CD8-positive, alpha-beta memory T cell (primary cell): ENCODE measurements at regions of chr6 and their contacts with region 1.

Region 1: GRCh38 chr6:166989427-166990032 is 9.7 kb upstream of the CEP43 start:
- DNase-seq: peak in 3 of 5 donors; percentile 7 to 59 (median 54)
- H3K4me3 ChIP-seq: no peak overlapping the region
- H3K4me3 Mint-ChIP-seq: no peak overlapping the region
- H3K27ac ChIP-seq: no peak overlapping the region
- H3K27ac Mint-ChIP-seq: peak overlapping the region in 1 of 8 donors; percentile 62
- H3K4me1 ChIP-seq: peaks cover 10% of the 10 kb centered on the region
- H3K4me1 Mint-ChIP-seq: peaks cover 7 to 17% (median 12%) of the 10 kb centered on the region in 3 donors
- H3K27me3 ChIP-seq: no peaks in the 10 kb centered on the region
- H3K27me3 Mint-ChIP-seq: no peaks in the 10 kb centered on the region

Region 2: DNA sequence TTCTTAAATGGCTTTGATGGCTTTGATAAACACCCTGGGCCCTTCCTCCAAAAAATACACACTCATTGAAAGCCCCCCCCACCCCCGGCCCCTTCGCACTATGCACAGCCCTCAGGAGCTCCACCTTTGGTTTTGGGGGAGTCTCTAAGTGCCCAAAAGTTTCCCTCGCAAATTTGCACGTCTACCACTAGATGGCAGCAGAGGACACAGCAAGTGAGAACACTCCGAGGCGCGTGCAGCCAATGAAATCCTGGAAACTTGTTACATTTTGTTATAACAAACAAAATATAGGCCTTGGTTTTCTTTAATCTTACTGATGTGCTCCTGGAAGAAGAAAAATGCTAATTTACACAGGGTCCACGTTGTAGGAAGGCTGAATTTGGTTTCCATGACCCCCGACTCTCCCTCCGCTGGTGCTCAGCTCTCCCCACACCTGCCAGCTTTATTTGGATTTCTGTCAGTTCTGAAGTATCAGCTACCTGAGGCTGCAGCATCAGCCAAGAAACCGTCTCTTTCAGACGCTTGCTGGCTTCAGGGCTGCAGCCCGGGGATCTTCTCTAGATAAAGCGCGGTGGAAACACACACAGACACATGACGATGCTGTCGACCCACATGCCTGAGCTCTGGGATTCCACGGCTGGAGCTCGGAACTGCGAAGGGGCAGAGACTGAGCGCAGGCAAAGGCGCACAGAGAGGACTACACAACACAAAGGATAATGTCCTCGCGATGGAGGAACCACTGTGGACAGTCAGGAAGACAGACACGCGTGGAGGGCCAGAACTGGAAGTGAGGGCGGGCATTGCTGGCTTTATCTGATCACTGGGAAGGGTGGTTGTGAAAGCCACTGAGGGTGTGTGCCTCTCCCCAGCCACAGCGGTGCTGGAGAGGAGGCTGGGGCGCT is 214.1 kb before region 1 on chr6:
- CTCF ChIA-PET with region 1: interaction called, 36 read pairs
- POLR2A ChIA-PET with region 1: no interaction called
- DNase-seq: peak; percentile 40 to 78 (median 59)
- H3K4me3 ChIP-seq: no peak overlapping the region
- H3K4me3 Mint-ChIP-seq: no peak overlapping the region
- H3K27ac ChIP-seq: no peak overlapping the region
- H3K27ac Mint-ChIP-seq: no peak overlapping the region
- H3K4me1 ChIP-seq: peaks cover 4% of the 10 kb centered on the region
- H3K4me1 Mint-ChIP-seq: peaks cover 0 to 6% (median 2%) of the 10 kb centered on the region in 3 donors
- H3K27me3 ChIP-seq: no peaks in the 10 kb centered on the region
- H3K27me3 Mint-ChIP-seq: peaks cover 4 to 47% of the 10 kb centered on the region in 2 donors

Region 3: DNA sequence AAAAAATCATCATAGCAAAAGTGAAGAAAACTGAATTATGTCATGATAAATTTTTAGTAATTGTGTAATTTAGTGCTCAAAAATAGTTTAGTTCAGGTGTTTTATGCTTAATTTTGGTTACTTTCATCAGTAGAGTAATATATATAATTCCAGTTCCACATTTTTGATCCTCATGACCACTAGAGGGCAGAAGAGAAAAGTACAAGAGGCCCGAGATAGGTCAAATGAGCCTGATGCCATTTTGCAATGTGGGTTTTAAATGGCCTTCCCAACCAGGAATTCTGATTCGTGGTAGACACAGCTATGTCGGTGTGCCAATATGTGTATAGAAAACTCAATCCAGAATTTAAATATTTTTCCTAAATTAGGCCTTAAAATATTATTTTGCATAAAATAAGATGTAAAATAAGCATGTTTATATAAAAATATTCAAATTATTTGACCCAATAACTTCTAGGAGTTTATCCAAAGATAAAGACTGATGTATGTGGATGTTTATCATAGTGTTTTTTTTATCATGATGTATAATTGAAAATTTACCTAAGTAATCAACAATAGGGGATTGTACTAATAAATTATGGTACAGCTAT is 202.7 kb before region 1 on chr6:
- CTCF ChIA-PET with region 1: interaction called, 46 read pairs
- POLR2A ChIA-PET with region 1: no interaction called
- DNase-seq: peak in 2 of 5 donors; percentile 43 to 49
- H3K4me3 ChIP-seq: no peak overlapping the region
- H3K4me3 Mint-ChIP-seq: no peak overlapping the region
- H3K27ac ChIP-seq: no peak overlapping the region
- H3K27ac Mint-ChIP-seq: peak overlapping the region in 1 of 8 donors; percentile 64
- H3K4me1 ChIP-seq: no peaks in the 10 kb centered on the region
- H3K4me1 Mint-ChIP-seq: no peaks in the 10 kb centered on the region
- H3K27me3 ChIP-seq: no peaks in the 10 kb centered on the region
- H3K27me3 Mint-ChIP-seq: peaks cover 0 to 6% of the 10 kb centered on the region in 2 donors

Region 4: DNA sequence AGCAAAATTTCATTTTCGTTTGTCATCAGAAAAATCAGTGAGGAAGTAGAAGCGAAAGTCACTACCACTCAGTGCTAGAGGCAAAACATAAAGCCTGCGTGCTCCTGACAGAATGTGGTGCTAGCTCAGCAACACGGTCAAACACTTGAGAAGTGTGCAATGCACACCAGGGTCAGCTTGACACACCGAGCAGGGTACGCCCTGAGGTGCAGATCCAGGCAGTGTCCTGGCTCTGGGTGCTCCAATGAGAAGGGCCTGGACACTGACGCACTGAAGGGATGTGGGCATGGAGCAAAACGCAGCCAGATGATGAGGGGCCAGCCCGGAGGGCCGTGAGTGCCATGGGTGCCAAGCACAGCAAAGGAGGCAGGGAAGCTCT is 39.1 kb before region 1 on chr6:
- CTCF ChIA-PET with region 1: interaction called, 37 read pairs
- POLR2A ChIA-PET with region 1: interaction called, 4 read pairs
- DNase-seq: no peak
- H3K4me3 ChIP-seq: peak overlapping the region; percentile 61
- H3K4me3 Mint-ChIP-seq: peak overlapping the region; percentile 80 to 95 (median 85)
- H3K27ac ChIP-seq: peak overlapping the region; percentile 71
- H3K27ac Mint-ChIP-seq: peak overlapping the region; percentile 89 to 100 (median 96)
- H3K4me1 ChIP-seq: peaks cover 60% of the 10 kb centered on the region
- H3K4me1 Mint-ChIP-seq: peaks cover 41 to 64% (median 61%) of the 10 kb centered on the region in 3 donors
- H3K27me3 ChIP-seq: no peaks in the 10 kb centered on the region
- H3K27me3 Mint-ChIP-seq: peaks cover 0 to 2% of the 10 kb centered on the region in 2 donors

Region 5: GRCh38 chr6:166956444-166957086 is 33.0 kb before region 1 on chr6 and contains the start of gene RNASET2:
- CTCF ChIA-PET with region 1: interaction called, 37 read pairs
- POLR2A ChIA-PET with region 1: interaction called, 4 read pairs
- DNase-seq: peak; percentile 95 to 99 (median 98)
- H3K4me3 ChIP-seq: peak within 1 kb of the TSS; percentile 91
- H3K4me3 Mint-ChIP-seq: peak within 1 kb of the TSS; percentile 83 to 96 (median 95)
- H3K27ac ChIP-seq: peak within 1 kb of the TSS; percentile 84
- H3K27ac Mint-ChIP-seq: peak within 1 kb of the TSS; percentile 93 to 98 (median 96)
- H3K4me1 ChIP-seq: peaks cover 63% of the 10 kb centered on the region
- H3K4me1 Mint-ChIP-seq: peaks cover 58 to 76% (median 75%) of the 10 kb centered on the region in 3 donors
- H3K27me3 ChIP-seq: no peaks in the 10 kb centered on the region
- H3K27me3 Mint-ChIP-seq: peaks cover 0 to 7% of the 10 kb centered on the region in 2 donors
- total RNA-seq, gene RNASET2: 22.3 to 27.6 TPM

Region 6: DNA sequence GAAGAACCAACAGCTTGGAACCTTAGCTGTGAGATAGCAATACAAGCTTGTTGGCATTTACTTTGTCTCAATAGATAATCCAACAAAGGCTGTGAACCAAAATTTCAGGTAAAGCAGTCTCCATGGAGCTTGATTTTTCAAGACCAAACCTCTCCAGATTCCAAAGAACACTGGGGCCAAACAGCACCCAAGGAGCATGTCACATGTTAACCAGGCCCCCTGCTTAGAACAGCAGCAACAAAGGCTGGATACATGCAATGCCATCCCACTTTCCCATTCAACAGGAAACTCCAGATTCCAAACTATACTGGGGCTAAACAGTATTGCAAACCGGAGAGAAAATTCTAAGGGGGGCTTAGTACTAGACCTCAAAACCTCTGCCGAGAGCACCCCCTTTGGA is 17.4 kb before region 1 on chr6:
- CTCF ChIA-PET with region 1: interaction called, 12 read pairs
- POLR2A ChIA-PET with region 1: no interaction called
- DNase-seq: no peak
- H3K4me3 ChIP-seq: no peak overlapping the region
- H3K4me3 Mint-ChIP-seq: no peak overlapping the region
- H3K27ac ChIP-seq: no peak overlapping the region
- H3K27ac Mint-ChIP-seq: no peak overlapping the region
- H3K4me1 ChIP-seq: peaks cover 19% of the 10 kb centered on the region
- H3K4me1 Mint-ChIP-seq: peaks cover 11 to 24% (median 12%) of the 10 kb centered on the region in 3 donors
- H3K27me3 ChIP-seq: no peaks in the 10 kb centered on the region
- H3K27me3 Mint-ChIP-seq: no peaks in the 10 kb centered on the region

Region 7: DNA sequence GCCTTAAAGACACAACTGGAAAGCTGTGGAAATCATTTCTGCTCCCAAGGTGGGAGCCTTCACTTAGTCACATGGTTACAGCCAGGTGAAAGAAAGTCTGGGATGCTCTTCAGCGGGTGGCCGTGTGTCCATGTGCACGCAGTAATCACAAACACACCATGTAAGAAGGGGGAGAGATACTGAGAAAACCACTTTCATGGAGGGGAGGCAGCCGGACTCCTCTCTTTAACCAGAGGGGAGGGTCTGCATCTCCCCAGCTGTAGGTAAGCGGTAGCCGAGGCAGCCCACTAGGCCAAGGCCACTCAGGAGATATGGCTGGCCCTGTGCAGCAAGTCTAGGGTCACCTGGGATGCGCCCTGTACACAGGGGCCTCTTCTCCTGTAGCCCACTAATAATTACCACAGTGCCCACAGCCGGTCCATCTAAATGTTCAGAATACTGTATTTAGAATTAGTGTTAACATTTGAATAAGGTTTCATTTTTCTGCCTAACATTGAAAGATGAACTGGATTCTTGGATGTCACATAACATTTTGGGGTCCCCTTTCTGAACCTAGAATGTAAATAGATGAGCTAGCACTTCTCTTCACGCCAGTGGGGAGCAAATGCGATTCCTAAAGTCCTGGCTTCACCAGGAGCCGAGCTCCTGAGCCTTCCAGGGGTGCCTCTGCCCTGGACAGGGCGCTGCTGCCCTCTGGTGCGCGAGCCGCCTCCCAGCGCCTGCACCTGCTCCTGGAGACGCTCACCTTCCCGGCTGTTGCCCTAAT is 152.3 kb after region 1 on chr6:
- CTCF ChIA-PET with region 1: interaction called, 14 read pairs
- POLR2A ChIA-PET with region 1: no interaction called
- DNase-seq: peak; percentile 21 to 66 (median 37)
- H3K4me3 ChIP-seq: no peak overlapping the region
- H3K4me3 Mint-ChIP-seq: peak overlapping the region in 3 of 7 donors; percentile 45 to 55 (median 51)
- H3K27ac ChIP-seq: no peak overlapping the region
- H3K27ac Mint-ChIP-seq: peak overlapping the region; percentile 35 to 93 (median 82)
- H3K4me1 ChIP-seq: no peaks in the 10 kb centered on the region
- H3K4me1 Mint-ChIP-seq: peaks cover 21 to 27% (median 23%) of the 10 kb centered on the region in 3 donors
- H3K27me3 ChIP-seq: no peaks in the 10 kb centered on the region
- H3K27me3 Mint-ChIP-seq: peaks cover 0 to 12% of the 10 kb centered on the region in 2 donors